ENCODE measurements at regions of chr14 and their contacts with region 1.

Region 1: DNA sequence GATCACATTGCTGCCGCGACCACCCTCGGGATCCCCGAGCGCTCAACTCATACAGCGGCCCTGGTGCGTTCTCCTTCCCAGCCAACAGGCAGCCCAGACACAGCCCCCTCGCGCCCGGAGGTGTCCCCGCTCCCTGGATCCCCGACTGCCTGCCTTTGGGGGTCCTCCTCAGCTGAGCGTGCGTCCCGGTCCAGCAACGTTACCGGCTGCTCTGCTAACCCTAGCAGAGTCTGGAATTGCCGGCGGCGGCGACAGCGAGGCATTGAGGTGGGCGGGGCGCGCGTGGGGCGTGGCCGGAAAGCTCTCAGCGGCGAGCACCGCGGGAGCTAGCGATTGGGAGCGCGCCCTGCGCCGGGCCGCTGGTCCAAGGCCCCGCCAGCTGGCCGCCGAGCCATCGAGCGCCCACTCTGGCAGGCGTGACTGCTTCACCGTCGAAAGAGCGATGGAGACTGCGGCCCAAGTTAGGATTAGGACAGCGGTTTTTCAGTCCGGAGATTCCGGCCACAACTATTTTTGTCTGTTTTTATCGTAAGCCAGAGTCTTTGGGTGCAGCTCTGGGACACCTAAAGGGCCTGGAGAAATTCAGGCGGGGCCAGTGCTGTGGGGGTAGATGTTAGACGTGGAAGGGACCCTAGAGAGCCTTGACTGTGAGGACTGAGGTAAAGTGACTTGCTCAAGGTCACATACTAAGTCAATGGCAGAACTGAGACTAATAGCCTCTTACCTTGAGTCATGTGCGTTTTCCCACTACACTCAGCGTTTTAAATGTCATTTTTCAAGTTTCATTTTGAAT is at the start of gene HEATR5A:
- DNase-seq: peak; percentile 94
- ATAC-seq: peak; percentile 91
- H3K4me3 Mint-ChIP-seq: peak within 1 kb of the TSS; percentile 94
- H3K27ac Mint-ChIP-seq: peak within 1 kb of the TSS; percentile 88
- H3K4me1 Mint-ChIP-seq: peaks cover 25% of the 10 kb centered on the region
- H3K27me3 Mint-ChIP-seq: peaks cover 3% of the 10 kb centered on the region
- total RNA-seq, gene HEATR5A: 8.5 to 9.4 TPM

Region 2: DNA sequence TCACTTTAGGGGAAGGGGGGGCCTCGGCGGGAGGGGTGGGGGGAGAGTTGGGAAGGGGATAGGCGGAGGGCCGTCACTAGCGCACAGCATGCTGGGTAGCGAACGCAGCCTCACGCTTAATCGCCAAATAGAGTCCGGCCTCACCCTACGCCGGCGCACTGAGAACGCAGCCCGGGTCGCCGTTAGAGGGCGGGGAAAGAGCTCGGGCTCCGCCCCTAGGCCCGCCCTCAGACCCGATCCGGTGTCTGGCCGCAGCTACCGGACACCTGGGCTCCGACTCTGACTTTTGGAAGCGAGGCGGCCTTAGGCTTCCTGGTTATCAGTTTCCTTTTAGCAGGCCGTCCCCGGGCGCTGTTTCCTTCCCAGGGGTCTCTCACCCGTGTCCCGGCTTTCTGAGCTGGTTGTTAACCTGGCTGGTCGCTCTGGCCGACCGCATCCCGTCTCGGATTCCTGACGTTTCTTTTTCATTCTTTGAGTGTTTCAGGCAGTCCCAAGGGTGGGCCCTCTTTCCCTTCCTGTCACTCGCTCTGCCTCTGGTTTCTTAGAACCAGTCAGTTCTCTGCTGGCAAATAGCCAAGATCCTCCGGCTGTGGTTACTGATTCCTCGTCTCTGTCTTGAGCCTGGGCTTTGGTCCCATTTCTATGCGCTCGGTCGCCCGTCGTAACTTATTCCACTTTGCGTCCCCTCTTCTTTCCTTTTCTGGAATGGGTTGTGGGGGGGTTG is 394.0 kb before region 1 on chr14:
- CTCF ChIA-PET with region 1: no interaction called
- POLR2A ChIA-PET with region 1: no interaction called
- intact Hi-C with region 1: loop called in 1 of 2 experiments (anchors 1 kb)
- DNase-seq: peak; percentile 95
- ATAC-seq: peak; percentile 91
- H3K4me3 Mint-ChIP-seq: peak overlapping the region; percentile 83
- H3K27ac Mint-ChIP-seq: peak overlapping the region; percentile 90
- H3K4me1 Mint-ChIP-seq: peaks cover 55% of the 10 kb centered on the region
- H3K27me3 Mint-ChIP-seq: no peaks in the 10 kb centered on the region

Region 3: GRCh38 chr14:31118892-31119291 is 301.6 kb before region 1 on chr14:
- CTCF ChIA-PET with region 1: no interaction called
- POLR2A ChIA-PET with region 1: no interaction called
- intact Hi-C with region 1: no loop called
- DNase-seq: no peak
- ATAC-seq: no peak
- H3K4me3 Mint-ChIP-seq: no peak overlapping the region
- H3K27ac Mint-ChIP-seq: peak overlapping the region; percentile 23
- H3K4me1 Mint-ChIP-seq: peaks cover 3% of the 10 kb centered on the region
- H3K27me3 Mint-ChIP-seq: no peaks in the 10 kb centered on the region

Region 4: GRCh38 chr14:31219169-31219568 is 201.3 kb before region 1 on chr14:
- CTCF ChIA-PET with region 1: no interaction called
- POLR2A ChIA-PET with region 1: no interaction called
- intact Hi-C with region 1: no loop called
- DNase-seq: no peak
- ATAC-seq: no peak
- H3K4me3 Mint-ChIP-seq: no peak overlapping the region
- H3K27ac Mint-ChIP-seq: no peak overlapping the region
- H3K4me1 Mint-ChIP-seq: no peaks in the 10 kb centered on the region
- H3K27me3 Mint-ChIP-seq: no peaks in the 10 kb centered on the region

Region 5: DNA sequence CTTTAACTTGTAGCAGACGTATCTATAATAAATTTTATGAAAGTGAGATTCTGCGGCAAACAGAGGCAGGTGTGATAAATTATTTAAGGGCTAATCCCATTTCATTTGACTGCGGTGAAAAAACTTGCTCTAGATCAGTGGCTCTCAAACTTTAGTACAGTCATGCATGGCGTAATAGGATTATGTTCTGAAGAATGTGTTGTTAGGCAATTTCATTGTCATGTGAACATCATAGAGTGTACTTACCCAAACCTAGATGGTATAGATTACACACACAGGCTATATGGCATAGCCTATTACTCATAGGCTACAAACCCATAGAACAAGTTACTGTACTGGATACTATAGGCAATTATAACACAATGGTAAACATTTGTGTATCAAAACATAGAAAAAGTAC is 83.9 kb before region 1 on chr14:
- CTCF ChIA-PET with region 1: no interaction called
- POLR2A ChIA-PET with region 1: no interaction called
- intact Hi-C with region 1: no loop called
- DNase-seq: no peak
- ATAC-seq: no peak
- H3K4me3 Mint-ChIP-seq: no peak overlapping the region
- H3K27ac Mint-ChIP-seq: no peak overlapping the region
- H3K4me1 Mint-ChIP-seq: no peaks in the 10 kb centered on the region
- H3K27me3 Mint-ChIP-seq: no peaks in the 10 kb centered on the region

Region 6: DNA sequence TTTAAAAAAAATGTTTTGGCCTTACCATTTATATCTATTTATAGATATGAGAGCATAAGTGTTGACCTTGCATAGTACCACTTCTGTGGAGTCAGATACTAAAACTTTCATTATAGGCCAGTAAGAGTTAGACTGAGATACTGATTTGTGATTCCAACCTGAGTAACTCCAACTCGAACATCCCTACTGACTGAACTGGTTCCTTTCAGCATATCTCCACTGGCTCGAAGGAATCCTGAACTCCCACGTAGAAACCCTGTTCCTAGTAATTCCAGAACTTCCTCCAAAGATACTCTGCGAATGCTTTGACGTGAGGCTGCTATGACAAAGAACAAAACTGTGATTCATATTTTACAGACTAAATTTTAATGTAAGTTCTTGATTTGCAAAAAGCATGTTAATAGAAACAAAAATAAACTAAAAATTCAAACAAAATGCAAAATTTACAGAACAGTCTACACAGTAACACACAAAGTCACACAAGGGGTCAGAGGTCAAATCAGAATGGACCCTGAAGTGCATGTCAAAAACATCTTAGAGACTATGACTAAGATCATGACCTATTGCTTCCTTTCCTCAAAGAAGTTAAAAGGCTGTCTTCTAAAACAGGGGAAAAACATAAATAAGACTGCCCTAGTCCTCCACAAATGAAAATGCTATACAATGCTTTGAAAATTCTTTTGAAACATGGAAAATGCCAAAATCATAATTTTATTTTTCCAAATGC is 31.7 kb before region 1 on chr14:
- CTCF ChIA-PET with region 1: interaction called, 4 read pairs
- POLR2A ChIA-PET with region 1: interaction called, 7 read pairs
- intact Hi-C with region 1: loop called (anchors 1 kb)
- DNase-seq: peak; percentile 27
- ATAC-seq: peak; percentile 68
- H3K4me3 Mint-ChIP-seq: no peak overlapping the region
- H3K27ac Mint-ChIP-seq: peak overlapping the region; percentile 75
- H3K4me1 Mint-ChIP-seq: peaks cover 28% of the 10 kb centered on the region
- H3K27me3 Mint-ChIP-seq: no peaks in the 10 kb centered on the region

Region 7: DNA sequence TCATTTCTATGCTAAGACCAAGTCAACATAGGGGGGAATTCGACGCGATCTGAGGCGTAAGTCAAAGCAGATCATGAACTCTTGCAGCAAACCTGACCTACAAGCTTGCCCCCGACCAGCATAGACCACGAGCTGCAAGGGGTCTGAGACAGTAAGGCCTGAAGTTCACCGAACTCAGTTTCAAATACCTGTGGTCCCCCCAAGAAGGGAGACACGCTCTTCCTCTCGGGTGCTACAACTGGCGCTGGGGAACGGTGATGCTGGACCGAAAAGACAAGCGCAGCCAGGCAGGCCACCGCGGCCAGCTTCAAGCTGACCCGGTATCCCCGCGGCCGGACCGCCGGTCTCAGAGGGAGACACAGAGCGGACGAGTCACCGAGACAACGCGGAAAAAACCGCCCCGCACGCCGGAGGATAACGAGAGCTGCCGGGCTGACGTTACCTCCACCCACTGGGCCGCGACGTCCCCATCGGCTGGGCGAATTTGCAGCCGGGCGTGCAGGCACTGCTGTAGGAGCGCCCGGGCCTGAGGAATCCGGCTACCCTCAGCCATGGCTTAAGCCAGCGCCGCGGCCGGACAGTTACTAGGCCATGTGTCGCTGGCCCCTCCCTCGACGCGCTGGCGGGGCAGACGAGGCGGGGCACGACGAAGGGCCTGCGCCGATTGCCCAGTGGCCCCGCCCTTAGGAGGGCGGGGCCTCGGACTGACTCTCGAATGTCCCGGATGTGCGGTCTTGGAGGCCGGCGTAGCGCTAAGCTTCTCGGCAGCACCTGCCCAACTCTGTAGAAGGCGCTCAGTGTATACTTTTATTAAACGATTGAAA is 36.5 kb after region 1 on chr14 and contains the start of gene DTD2:
- CTCF ChIA-PET with region 1: interaction called, 6 read pairs
- POLR2A ChIA-PET with region 1: interaction called, 9 read pairs
- intact Hi-C with region 1: loop called (anchors 1 to 2 kb)
- DNase-seq: peak; percentile 95
- ATAC-seq: peak; percentile 99
- H3K4me3 Mint-ChIP-seq: peak within 1 kb of the TSS; percentile 98
- H3K27ac Mint-ChIP-seq: peak within 1 kb of the TSS; percentile 95
- H3K4me1 Mint-ChIP-seq: peaks cover 22% of the 10 kb centered on the region
- H3K27me3 Mint-ChIP-seq: peaks cover 2% of the 10 kb centered on the region
- total RNA-seq, gene DTD2: 17.5 to 21.6 TPM

Region 8: DNA sequence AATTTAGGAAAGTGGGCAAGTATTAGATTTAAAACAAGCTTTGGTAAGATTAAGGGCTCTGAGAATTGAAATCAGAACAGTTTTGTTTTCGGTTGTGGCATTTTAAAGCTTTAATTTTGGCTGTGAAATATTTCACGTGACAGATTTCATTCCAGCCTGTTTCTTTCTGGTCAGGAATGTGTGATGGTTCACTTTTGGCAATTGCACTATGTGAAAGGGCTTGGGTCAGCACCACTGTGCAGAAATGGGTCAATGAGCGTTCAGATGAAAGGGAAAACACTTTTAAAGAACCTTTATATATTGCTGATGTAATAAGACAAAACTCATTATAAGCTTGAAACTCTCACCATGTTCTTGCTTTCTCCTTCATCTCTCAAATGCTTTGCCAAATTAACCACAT is 157.8 kb after region 1 on chr14:
- CTCF ChIA-PET with region 1: no interaction called
- POLR2A ChIA-PET with region 1: no interaction called
- intact Hi-C with region 1: no loop called
- DNase-seq: no peak
- ATAC-seq: no peak
- H3K4me3 Mint-ChIP-seq: no peak overlapping the region
- H3K27ac Mint-ChIP-seq: no peak overlapping the region
- H3K4me1 Mint-ChIP-seq: peaks cover 14% of the 10 kb centered on the region
- H3K27me3 Mint-ChIP-seq: no peaks in the 10 kb centered on the region